ENCODE measurements at regions of chr2 and their contacts with region 1.

Region 1: DNA sequence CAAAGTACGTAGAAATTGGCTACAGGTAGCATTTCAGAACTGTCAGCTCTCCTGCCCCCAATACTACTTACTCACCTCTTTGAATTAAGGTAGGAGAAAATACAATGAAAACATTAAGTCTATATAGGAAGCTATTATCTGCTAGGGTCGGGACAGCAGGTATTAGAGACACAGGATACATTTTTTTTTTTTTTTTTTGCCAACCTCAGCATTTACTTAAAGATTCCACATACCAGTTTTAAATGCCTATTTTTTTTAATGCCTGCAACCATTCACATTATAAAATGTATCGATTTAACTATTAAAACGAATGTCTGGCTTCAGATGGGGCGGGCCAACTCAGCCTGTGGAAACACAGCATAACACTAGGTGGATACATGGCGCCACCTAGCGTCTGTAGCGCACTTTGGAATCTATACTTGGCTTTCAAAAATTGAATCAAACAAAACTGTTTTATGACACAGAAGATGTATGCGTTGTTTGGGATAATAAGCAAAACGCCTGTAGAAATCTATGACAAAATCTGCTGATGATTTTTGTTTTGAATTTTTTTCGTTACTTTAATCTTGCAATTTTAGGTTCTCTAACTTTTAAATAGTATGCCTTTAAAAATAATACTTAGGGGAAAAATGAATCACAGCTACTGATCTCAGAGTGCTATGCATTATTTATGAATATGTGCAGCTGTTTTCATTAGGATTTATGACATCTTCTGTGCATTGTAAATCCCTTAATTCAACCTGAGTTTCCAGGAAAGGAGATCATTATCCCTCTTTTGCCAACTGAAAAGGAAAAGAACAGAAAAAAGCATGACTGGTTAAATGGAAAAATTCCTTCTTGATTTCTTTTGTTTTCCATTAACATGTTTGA is 261.0 kb downstream of the NYAP2 start:
- DNase-seq: peak; percentile 83
- ATAC-seq: peak; percentile 81
- H3K4me3 Mint-ChIP-seq: no peak overlapping the region
- H3K27ac Mint-ChIP-seq: no peak overlapping the region
- H3K4me1 Mint-ChIP-seq: no peaks in the 10 kb centered on the region
- H3K27me3 Mint-ChIP-seq: peaks cover 18% of the 10 kb centered on the region

Region 2: DNA sequence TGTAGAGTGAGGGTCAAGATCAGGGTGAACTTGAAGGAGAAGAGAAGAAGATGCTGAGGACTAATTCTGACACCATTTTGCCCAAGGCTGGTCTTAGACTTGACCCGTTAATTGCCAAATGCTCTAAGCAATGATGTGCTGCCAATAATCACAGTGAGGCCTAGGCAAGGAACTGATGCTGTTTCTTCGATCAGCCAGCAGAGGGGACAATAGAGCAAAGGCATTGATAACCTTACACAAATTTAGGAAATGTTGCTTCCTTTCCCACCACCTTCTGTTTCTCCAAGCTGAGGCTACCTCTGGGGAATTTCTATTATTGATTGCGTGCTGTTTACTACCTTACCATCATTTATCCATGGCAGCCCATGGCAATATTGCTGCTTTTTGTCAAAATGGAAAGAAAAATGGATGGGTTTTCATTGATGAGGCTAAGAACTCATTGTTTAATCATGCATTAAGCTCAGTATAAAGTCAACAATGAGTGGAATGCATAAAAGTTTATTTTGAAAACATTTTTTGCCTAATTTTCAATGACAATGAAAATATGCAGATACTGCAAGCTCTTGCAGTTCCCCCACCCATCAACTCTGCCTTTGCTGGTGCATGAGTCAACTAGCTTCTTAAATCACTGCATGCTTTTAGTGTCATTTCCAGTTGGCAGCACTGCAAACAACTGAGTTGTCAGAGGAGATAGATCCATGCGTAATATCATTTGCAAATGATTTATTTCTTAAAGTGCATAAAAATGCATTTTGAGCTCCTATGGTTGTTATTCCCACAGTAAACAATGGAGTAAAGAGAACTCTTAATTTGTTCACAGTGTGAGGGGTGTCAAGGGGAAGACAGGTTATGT is 377.4 kb before region 1 on chr2:
- CTCF ChIA-PET with region 1: interaction called, 28 read pairs
- POLR2A ChIA-PET with region 1: no interaction called
- DNase-seq: peak; percentile 45
- ATAC-seq: peak; percentile 67
- H3K4me3 Mint-ChIP-seq: no peak overlapping the region
- H3K27ac Mint-ChIP-seq: no peak overlapping the region
- H3K4me1 Mint-ChIP-seq: no peaks in the 10 kb centered on the region
- H3K27me3 Mint-ChIP-seq: no peaks in the 10 kb centered on the region

Measured in activated CD8-positive, alpha-beta T cell treated with anti-CD3 and anti-CD28 coated beads, Interleukin-2, amount 10 ng/mL, durations not matched to agents 7 days and 5 days (primary cell).